Left cardiac atrium (tissue), 4 donors: ENCODE measurements at regions of chr22 and their contacts with region 1.

Region 1: GRCh38 chr22:30326706-30327362 is at the start of gene TBC1D10A:
- DNase-seq: peak; percentile 92
- ATAC-seq: peak; percentile 95 to 96
- total RNA-seq, gene TBC1D10A: 11.9 to 12.3 TPM

Region 2: GRCh38 chr22:30289134-30289979 is 37.5 kb before region 1 on chr22 and contains the start of gene CASTOR1:
- intact Hi-C with region 1: loop called in 1 of 2 experiments (anchors 5 kb)
- DNase-seq: peak; percentile 99
- ATAC-seq: peak; percentile 89 to 91
- total RNA-seq, gene CASTOR1: 7.4 to 9.4 TPM